HEK293 (cell line): ENCODE measurements at regions of chr9 and their contacts with region 1.

Region 1: GRCh38 chr9:112379177-112380101 is 469 bp upstream of the HSDL2 start:
- H3K4me3 ChIP-seq: peak overlapping the region; percentile 89
- H3K27ac ChIP-seq: peak overlapping the region; percentile 95
- H3K4me1 ChIP-seq: no peaks in the 10 kb centered on the region
- CTCF ChIP-seq: no peak

Region 2: DNA sequence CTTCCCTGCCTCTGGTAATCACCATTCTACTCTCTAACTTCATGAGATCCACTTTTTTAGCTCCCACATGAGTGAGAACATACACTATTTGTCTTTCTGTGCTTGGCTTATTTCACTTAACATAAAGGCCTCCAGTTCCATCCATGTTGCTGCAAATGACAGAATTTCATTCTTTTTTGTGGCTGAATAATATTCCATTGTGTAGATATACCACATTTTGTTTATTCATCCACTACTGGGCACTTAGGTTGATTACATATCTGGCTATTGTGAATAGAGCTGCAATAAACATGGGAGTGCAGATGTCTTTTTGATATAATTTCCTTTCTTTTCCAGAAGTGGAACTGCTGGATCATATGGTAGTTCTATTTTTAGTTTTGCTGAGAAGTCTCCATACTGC is 613.4 kb before region 1 on chr9:
- CTCF ChIA-PET with region 1: no interaction called
- POLR2A ChIA-PET with region 1: no interaction called
- H3K4me3 ChIP-seq: no peak overlapping the region
- H3K27ac ChIP-seq: no peak overlapping the region
- H3K4me1 ChIP-seq: no peaks in the 10 kb centered on the region
- CTCF ChIP-seq: no peak

Region 3: GRCh38 chr9:112333639-112334431 is 45.6 kb before region 1 on chr9:
- CTCF ChIA-PET with region 1: interaction called, 3 read pairs
- POLR2A ChIA-PET with region 1: interaction called, 21 read pairs
- H3K4me3 ChIP-seq: peak overlapping the region; percentile 90
- H3K27ac ChIP-seq: peak overlapping the region; percentile 96
- H3K4me1 ChIP-seq: no peaks in the 10 kb centered on the region
- CTCF ChIP-seq: peak; percentile 29; the same call in 1 of the 2 replicates

Region 4: GRCh38 chr9:112433499-112434392 is 54.3 kb after region 1 on chr9:
- CTCF ChIA-PET with region 1: no interaction called
- POLR2A ChIA-PET with region 1: no interaction called
- H3K4me3 ChIP-seq: no peak overlapping the region
- H3K27ac ChIP-seq: no peak overlapping the region
- H3K4me1 ChIP-seq: no peaks in the 10 kb centered on the region
- CTCF ChIP-seq: no peak

Region 5: GRCh38 chr9:112486221-112487007 is 107.0 kb after region 1 on chr9 and contains the start of gene KIAA1958:
- CTCF ChIA-PET with region 1: no interaction called
- POLR2A ChIA-PET with region 1: interaction called, 27 read pairs
- H3K4me3 ChIP-seq: peak within 1 kb of the TSS; percentile 97
- H3K27ac ChIP-seq: peak within 1 kb of the TSS; percentile 82
- H3K4me1 ChIP-seq: peaks cover 11% of the 10 kb centered on the region; the same call in 1 of the 2 replicates
- CTCF ChIP-seq: 0 out of 2 replicates have a peak, but pooled peaks have one; percentile 8